Activated CD4-positive, alpha-beta T cell treated with anti-CD3 and anti-CD28 coated beads, Interleukin-2, amount 10 ng/mL, durations not matched to agents 24 days and 14 days (primary cell): ENCODE measurements at regions of chr2 and their contacts with region 1.

Region 1: DNA sequence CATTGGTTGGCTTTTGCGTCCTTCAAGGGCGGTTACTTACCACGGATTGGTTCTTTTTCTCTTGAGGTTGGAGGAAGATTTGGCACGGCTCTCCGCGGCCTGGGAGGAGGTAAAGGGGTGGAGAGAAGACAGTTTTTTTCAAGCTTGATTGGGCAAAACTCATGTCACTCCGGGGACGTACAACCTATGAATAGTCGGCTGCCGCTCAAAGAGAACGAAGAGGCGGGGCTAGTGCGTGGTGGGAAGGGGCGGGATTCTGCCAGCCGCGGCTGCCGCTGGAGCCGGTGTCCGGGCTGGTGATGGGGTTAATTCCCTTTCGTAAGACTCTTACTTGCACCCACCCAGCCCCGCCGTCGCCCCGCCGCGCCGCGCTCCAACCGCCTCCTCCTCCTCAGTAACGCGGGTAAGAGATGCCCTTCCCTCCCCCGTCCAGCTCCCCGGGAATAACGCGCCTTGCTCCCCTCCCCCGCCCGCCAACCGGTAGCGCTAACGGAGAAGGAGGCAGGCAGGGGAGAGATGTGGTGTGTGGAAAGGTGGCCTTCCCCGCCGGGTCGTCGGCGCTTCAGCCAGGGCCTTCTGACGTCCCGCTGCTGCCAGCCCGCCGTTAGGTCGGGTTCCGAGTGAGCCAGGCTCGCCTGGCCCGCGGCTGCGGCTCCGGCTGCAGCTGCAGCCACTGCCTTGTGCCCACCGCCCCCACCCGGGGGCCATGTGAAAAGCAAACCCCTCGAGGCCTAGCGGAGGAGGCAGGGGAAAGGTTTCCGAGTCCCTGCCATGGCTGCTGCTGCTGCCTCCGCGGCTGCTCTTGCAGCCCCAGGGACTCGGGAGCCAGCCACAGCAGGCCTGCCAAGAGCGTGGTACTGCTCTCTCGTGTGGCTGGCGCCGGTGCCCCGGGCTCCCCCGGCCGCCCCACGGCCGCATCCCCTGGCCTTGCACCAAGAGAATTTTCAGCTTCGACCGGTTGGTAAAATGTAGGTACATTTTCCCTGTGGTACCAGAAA is at the start of gene R3HDM1:
- DNase-seq: peak; percentile 97
- H3K4me3 Mint-ChIP-seq: no peak within 1 kb of the TSS
- H3K27ac Mint-ChIP-seq: no peak within 1 kb of the TSS
- H3K4me1 Mint-ChIP-seq: peaks cover 29% of the 10 kb centered on the region
- H3K27me3 Mint-ChIP-seq: no peaks in the 10 kb centered on the region
- total RNA-seq, gene R3HDM1: 65.8 and 78.3 TPM in 2 replicates

Region 2: GRCh38 chr2:134918526-134919340 is 612.8 kb before region 1 on chr2 and contains the start of gene CCNT2:
- intact Hi-C with region 1: loop called (anchors 1 kb)
- DNase-seq: peak; percentile 100
- H3K4me3 Mint-ChIP-seq: peak within 1 kb of the TSS; percentile 96
- H3K27ac Mint-ChIP-seq: peak within 1 kb of the TSS; percentile 97
- H3K4me1 Mint-ChIP-seq: peaks cover 23% of the 10 kb centered on the region
- H3K27me3 Mint-ChIP-seq: peaks cover 6% of the 10 kb centered on the region
- total RNA-seq, gene CCNT2: 46.0 and 48.5 TPM in 2 replicates

Region 3: DNA sequence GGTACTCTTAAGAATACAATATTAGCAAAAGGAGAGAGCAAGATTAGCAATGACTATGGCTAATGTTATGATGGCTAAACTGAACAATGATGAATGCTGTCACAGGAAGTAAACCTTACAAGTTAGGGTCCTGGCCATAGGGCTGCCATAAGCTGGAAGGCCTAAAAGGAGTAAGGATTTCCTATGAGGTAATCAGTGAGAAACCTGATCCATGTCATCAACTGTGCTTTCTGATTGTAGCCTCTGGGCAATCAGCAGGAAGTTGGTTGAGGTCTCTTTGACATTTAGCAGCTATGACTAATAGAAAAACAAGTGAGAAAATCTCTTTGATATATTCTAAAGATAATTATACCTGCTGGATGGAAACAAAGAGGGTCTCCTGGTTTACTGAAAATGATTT is 286.5 kb before region 1 on chr2:
- intact Hi-C with region 1: loop called (anchors 10 kb)
- DNase-seq: peak; percentile 71
- H3K4me3 Mint-ChIP-seq: no peak overlapping the region
- H3K27ac Mint-ChIP-seq: peak overlapping the region; percentile 86
- H3K4me1 Mint-ChIP-seq: peaks cover 22% of the 10 kb centered on the region
- H3K27me3 Mint-ChIP-seq: no peaks in the 10 kb centered on the region

Region 4: DNA sequence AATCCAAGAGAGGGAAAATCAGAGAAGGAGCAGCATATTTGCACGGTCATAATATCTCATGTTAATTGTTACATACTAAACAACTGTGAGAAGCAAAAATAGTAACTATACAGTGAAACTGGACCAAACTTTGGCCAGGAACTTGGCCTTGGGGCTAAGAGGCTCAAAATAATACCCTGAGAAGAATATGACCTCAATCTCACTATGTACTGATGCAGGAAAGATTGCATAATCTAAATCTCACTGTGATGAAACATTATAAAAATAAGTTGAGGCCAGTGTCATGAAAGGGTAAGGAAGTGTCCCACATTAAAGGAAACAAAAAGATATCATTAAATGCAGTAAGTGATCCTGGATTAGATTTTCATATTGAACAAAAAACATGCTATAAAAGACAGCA is 37.0 kb before region 1 on chr2:
- intact Hi-C with region 1: no loop called
- DNase-seq: no peak
- H3K4me3 Mint-ChIP-seq: no peak overlapping the region
- H3K27ac Mint-ChIP-seq: no peak overlapping the region
- H3K4me1 Mint-ChIP-seq: no peaks in the 10 kb centered on the region
- H3K27me3 Mint-ChIP-seq: no peaks in the 10 kb centered on the region

Region 5: GRCh38 chr2:135664623-135665068 is 133.1 kb after region 1 on chr2:
- intact Hi-C with region 1: loop called (anchors 2 kb)
- DNase-seq: no peak
- H3K4me3 Mint-ChIP-seq: no peak overlapping the region
- H3K27ac Mint-ChIP-seq: peak overlapping the region; percentile 79
- H3K4me1 Mint-ChIP-seq: peaks cover 31% of the 10 kb centered on the region
- H3K27me3 Mint-ChIP-seq: no peaks in the 10 kb centered on the region

Region 6: GRCh38 chr2:135709992-135710391 is 178.5 kb after region 1 on chr2:
- intact Hi-C with region 1: loop called (anchors 1 kb)
- DNase-seq: peak; percentile 91
- H3K4me3 Mint-ChIP-seq: no peak overlapping the region
- H3K27ac Mint-ChIP-seq: no peak overlapping the region
- H3K4me1 Mint-ChIP-seq: peaks cover 2% of the 10 kb centered on the region
- H3K27me3 Mint-ChIP-seq: no peaks in the 10 kb centered on the region

Region 7: DNA sequence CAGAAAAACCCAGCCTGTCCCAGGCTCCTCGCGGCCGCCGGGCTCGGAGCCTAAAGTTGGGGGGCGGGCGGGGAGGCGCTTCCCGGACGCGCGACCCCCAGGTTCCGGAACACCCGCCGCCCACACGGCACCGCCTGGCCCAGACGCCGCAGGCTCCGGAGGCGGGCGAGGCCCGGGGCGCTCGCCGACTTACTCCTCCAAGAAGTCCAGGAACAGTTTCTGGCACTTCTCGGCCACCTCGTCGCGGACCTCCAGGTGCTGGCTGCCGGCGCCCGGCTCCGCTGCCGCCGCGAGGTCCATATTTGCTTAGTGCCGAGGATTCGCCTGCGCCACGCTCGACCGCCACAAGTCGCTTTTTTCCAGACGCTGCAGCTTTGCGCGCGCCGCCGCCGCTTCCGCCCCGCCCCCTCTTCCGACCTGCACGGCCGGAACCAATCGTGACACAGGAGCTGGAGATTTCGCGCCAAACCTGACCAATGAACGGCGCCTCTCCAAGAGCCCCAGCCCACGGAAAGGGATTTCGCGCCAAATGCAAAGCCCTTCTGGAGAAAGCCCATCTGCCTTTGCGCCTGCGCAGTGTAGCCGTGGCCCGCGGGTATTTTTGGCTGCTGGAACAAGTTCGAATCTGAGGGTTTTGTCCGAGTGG is 344.7 kb after region 1 on chr2 and contains the start of gene MCM6:
- intact Hi-C with region 1: loop called (anchors 2 kb)
- DNase-seq: peak; percentile 100
- H3K4me3 Mint-ChIP-seq: peak within 1 kb of the TSS; percentile 83
- H3K27ac Mint-ChIP-seq: peak within 1 kb of the TSS; percentile 97
- H3K4me1 Mint-ChIP-seq: peaks cover 31% of the 10 kb centered on the region
- H3K27me3 Mint-ChIP-seq: peaks cover 2% of the 10 kb centered on the region
- total RNA-seq, gene MCM6: 196 and 197 TPM in 2 replicates